ENCODE measurements at regions of chr1 and their contacts with region 1.

Region 1: DNA sequence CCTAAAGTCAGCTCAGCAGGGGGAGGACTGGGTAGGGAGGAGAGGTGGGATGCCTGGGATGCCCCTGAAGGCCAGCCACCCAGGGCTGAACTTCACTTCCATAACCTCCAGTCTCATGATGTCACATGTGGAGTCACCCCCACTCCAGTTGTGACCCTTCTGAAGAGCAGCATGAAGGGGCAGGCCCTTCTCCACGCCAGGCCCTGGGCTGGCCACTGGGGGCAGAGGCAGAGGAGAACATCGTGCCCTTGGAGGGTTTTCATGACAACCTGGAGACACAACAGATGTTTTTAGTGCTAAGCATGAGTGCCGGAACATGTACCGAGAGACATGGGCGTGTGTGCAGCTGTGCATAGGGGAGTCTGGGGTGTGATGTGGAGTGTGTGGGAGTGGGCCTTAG is 37.6 kb downstream of the FAAH start:
- DNase-seq: no peak
- ATAC-seq: 0 out of 3 replicates have a peak, but pooled peaks have one; percentile 21
- H3K4me3 ChIP-seq: no peak overlapping the region
- H3K27ac ChIP-seq: no peak overlapping the region
- H3K4me1 ChIP-seq: no peaks in the 10 kb centered on the region
- H3K27me3 ChIP-seq: peaks cover 0 to 1% of the 10 kb centered on the region in 2 experiments; a peak in 2 of 4 replicates
- CTCF ChIP-seq: peak in 1 of 3 experiments; percentile 7; a peak in 1 of 6 replicates
- EP300 ChIP-seq: no peak
- POLR2A ChIP-seq: no peak
- RAD21 ChIP-seq: no peak

Region 2: DNA sequence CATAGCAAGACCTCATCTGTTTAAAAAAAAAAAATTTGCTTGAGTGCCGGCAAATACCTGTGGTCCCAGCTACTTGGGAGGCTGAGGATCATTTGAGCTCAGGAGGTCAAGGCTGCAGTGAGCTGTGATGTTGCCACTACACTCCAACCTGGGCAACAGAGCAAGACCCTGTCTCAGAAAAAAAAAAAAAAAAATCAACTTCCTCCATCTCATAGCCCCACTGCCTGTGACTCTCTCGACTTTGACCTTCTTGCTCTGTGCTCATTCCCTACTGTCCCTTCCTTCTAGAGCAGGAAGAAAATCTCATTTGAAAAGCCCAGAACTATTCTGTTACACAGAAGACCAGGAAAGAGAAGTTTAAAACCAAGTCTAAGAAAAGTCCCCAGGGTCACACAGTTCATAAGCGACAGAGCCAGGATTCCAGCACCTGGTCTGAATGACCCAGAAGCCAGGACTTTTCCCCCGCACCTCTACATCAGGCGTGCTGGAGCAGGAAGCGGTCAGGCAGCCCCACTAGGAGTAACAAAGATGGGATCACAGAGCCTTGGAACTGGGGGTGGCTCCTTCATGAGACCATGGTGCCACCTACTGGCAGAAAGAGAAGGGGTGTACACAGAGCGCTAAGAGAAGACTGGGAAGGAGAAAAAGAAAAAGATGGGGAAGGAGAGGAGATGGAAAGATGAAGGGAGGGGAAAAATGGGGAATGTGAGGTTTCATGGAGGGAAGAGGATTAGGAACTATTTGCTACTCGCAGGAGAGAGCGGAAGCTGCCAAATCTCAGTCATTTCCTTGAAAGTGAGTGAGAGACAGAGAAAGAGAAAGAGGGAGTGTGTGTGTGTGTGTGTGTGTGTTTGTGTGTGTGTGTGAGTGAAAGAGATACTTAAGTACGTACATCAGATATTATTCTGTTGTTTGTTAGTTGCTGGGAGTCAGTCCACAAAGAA is 252.3 kb before region 1 on chr1:
- CTCF ChIA-PET with region 1: no interaction called
- POLR2A ChIA-PET with region 1: no interaction called
- RAD21 ChIA-PET with region 1: no interaction called
- SMC1A ChIA-PET with region 1: no interaction called
- in situ Hi-C with region 1: no loop called
- intact Hi-C with region 1: no loop called
- DNase-seq: no peak
- ATAC-seq: peak; percentile 88
- H3K4me3 ChIP-seq: no peak overlapping the region
- H3K27ac ChIP-seq: no peak overlapping the region
- H3K4me1 ChIP-seq: peaks cover 18% of the 10 kb centered on the region
- H3K27me3 ChIP-seq: no peaks in the 10 kb centered on the region
- CTCF ChIP-seq: peak; percentile 88 to 94 (median 91); a peak in 5 of 6 replicates
- EP300 ChIP-seq: no peak
- POLR2A ChIP-seq: no peak
- RAD21 ChIP-seq: peak; percentile 99

Region 3: DNA sequence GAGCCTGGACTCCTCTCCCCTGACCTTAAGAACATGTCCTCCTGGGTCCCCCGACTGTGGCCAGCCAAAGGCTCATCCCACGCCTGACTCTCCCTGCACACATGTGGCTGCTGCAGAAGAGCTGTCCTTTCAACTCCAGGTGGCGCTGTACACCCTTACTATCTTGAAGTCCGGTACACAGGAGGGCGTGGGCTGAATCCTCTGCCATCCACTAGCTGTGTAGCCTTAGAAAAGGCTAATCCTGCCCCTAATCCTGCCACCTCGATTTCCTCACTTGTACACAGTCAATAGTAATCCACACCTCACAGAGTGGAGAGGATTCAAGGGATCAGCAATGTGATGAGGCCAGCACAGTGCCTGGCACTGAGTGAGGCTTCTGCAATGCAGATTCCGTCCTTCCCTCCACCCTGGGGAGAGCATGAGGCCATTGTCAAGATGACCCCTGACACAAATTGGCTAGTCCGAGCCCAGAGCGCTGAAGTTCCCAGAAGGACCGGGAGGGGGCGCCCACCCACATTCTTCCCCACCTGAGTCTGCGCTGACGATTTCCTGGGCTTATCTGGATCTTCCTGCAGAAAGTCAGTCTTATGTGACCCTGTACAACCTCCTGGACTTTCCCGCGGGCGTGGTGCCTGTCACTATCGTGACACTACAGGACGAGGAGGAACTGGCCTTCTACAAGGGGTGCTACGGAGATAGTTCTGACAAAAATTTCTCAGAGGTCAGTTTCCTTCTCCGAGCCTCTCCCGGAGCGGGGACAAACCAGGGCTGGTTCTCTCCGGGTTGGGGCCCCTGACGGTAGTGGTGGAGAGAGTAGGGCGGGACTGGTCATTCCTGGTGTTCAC is 10.8 kb after region 1 on chr1:
- CTCF ChIA-PET with region 1: interaction called, 31 read pairs
- POLR2A ChIA-PET with region 1: no interaction called
- RAD21 ChIA-PET with region 1: no interaction called
- SMC1A ChIA-PET with region 1: no interaction called
- in situ Hi-C with region 1: no loop called
- intact Hi-C with region 1: no loop called
- DNase-seq: no peak
- ATAC-seq: peak; percentile 89
- H3K4me3 ChIP-seq: no peak overlapping the region; the same call in 1 of the 2 replicates
- H3K27ac ChIP-seq: no peak overlapping the region
- H3K4me1 ChIP-seq: peaks cover 4% of the 10 kb centered on the region; the same call in 1 of the 2 replicates
- H3K27me3 ChIP-seq: peaks cover 4 to 11% of the 10 kb centered on the region in 2 experiments
- CTCF ChIP-seq: peak; percentile 75 to 89 (median 88)
- EP300 ChIP-seq: no peak
- POLR2A ChIP-seq: no peak
- RAD21 ChIP-seq: 0 out of 2 replicates have a peak, but pooled peaks have one; percentile 15